Left colon (tissue), 2 donors: ENCODE measurements at regions of chr12 and their contacts with region 1.

Region 1: DNA sequence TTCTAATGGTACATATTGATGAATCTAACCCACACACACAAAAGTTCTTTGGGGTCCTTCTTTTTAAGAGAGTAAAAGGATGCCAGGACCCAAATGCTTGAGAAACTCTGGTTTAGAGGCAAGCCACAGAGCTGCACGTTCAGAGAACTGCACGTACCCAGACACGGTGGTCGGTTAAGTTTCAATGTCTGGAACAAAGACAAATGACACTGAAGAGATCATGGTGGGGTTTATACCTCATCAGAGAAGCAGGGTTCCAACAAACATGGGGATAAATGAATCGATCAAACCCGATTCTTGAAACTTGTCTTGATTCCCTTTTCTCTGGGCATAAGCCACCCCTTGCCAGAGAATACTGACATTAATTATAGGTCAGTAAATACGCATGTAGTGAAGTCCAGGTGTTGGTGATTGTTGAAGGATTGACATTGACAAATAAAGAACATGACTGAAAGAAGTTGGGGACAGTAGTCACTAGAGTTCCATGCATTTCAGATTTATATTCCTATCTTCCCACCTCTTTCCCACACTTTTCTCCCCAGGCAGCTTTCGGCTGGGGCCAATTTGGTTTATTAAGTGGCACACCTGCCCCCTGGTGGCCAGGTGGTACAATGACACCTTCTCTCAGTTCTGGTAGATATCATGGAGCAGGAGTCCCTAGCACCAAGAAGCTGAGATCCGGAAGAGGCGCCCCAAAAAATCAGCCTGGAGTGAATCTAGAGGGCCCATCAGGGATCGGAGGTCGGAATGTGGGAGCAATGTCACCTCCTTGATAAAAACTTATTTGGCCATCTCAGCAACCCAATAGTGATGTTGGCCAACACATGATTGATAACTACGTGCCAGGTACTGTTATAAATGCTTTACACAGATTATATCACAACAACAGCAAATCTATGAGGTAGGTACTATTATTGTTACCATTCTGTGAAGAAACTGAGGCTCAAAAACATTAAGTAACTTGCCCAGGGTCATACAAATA is 17.8 kb upstream of the HDAC7 start:
- DNase-seq: peak in 1 of 2 donors; percentile 68
- ATAC-seq: peak; percentile 50

Region 2: GRCh38 chr12:47032644-47033043 is 804.8 kb before region 1 on chr12:
- intact Hi-C with region 1: no loop called
- DNase-seq: no peak
- ATAC-seq: peak; percentile 61

Region 3: GRCh38 chr12:47715393-47715876 is 122.0 kb before region 1 on chr12:
- intact Hi-C with region 1: loop called (anchors 5 to 10 kb)
- DNase-seq: peak; percentile 70 to 83
- ATAC-seq: peak; percentile 60

Region 4: GRCh38 chr12:47779301-47779942 is 58.1 kb before region 1 on chr12:
- intact Hi-C with region 1: loop called in 1 of 2 experiments (anchors 5 kb)
- DNase-seq: peak; percentile 72 to 88
- ATAC-seq: peak; percentile 81

Region 5: GRCh38 chr12:47797441-47797840 is 40.0 kb before region 1 on chr12:
- intact Hi-C with region 1: loop called in 1 of 2 experiments (anchors 5 kb)
- DNase-seq: peak in 1 of 2 donors; percentile 56
- ATAC-seq: peak; percentile 66

Region 6: GRCh38 chr12:47882781-47883546 is 45.5 kb after region 1 on chr12:
- intact Hi-C with region 1: no loop called
- DNase-seq: peak; percentile 62 to 71
- ATAC-seq: peak; percentile 85